ENCODE measurements at regions of chr1 and their contacts with region 1.

Region 1: DNA sequence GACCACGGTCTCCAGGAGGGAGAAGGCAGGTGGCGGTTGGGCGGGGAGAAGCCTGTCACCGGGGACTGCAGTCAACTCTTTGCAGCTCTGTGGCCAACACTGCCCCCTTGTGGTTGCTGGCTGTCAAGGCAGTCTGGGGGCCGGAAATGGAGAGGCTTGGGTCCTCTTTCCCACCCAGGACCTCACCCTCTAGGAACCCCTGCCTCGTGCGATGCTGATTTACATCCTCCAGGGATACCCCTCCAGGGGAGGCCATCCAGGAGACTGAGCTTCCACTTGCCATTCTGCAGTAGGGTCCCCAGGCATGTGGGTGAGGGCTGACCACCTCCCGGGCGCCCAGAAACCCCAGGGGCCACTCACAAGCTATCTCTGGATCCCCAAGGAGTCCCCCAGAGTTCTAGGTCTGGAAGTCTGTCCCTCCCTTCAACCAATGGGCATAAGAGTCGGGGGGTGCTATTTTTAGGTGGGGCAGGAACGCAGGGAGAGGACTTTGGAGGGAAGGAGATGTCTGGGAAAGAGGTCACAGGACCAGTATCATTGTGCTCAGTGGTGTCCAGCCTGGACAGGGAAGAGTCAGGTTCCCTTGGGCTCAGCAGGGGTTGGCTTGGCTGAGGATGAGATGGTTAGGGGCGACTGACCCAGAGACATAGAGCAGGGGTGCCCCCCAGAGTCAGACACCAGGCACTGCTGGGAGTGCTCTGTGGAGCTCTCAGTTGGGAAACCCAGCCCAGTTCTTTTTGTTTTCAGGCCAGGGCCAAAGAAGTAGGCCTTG is 7.1 kb upstream of the GPR61 start:
- DNase-seq: peak; percentile 74
- H3K4me3 ChIP-seq: no peak overlapping the region
- H3K27ac ChIP-seq: no peak overlapping the region
- H3K4me1 ChIP-seq: no peaks in the 10 kb centered on the region
- H3K27me3 ChIP-seq: no peaks in the 10 kb centered on the region
- CTCF ChIP-seq: peak; percentile 96 to 97 (median 96)
- POLR2A ChIP-seq: no peak

Region 2: DNA sequence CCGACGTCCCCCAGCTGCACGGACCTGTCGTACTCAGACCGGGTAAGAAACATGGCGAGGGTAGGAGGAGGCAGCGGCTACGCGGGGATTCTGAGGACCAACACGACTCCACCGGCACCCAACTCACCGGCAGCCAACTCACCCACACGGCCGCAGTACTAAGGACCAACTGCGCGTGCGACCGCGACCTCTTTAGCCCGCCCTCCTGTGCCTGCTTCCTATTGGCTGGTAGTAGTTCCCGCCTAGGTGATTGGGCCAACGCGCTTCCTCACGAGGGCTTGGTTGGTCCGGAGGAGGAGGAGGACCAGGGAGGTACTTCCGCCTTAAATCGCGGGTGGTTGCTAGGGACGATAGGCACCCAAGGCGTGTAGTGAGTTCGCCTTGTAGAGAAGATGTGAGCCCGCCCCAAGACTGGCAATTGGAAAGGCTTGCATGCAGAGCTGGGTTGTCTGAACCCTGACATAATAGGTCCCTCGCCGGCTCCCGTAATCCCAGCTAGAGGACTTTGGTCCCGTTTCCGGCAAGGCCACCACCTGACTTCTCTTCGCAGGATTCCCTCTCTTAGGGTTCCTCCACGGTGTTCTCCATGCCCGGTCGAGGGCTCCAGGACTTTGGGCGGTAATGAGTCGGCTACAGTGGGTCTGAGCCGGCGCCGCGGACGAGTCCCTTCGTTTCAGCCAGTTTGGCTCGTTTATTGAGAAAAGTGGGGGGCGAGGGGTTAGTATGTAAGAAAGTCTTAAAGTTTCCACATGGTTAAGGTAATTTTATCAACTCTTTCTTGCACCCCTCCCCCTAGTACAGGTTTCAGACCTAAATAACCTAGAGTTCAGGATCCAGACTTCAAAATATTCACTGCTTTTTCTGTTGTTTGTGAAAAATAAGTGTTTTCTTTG is 106.0 kb before region 1 on chr1 and contains the start of gene PSMA5:
- intact Hi-C with region 1: loop called (anchors 10 kb)
- DNase-seq: peak; percentile 98
- H3K4me3 ChIP-seq: peak within 1 kb of the TSS; percentile 74 to 84
- H3K27ac ChIP-seq: peak within 1 kb of the TSS; percentile 72 to 73
- H3K4me1 ChIP-seq: peaks cover 8% of the 10 kb centered on the region
- H3K27me3 ChIP-seq: no peaks in the 10 kb centered on the region
- CTCF ChIP-seq: peak in 1 of 4 experiments; percentile 5
- POLR2A ChIP-seq: peak; percentile 68
- total RNA-seq, gene PSMA5: 24.6 to 31.8 TPM

Region 3: GRCh38 chr1:109498161-109498801 is 34.3 kb before region 1 on chr1:
- intact Hi-C with region 1: loop called (anchors 1 kb)
- DNase-seq: no peak
- H3K4me3 ChIP-seq: no peak overlapping the region
- H3K27ac ChIP-seq: no peak overlapping the region
- H3K4me1 ChIP-seq: peaks cover 8% of the 10 kb centered on the region
- H3K27me3 ChIP-seq: no peaks in the 10 kb centered on the region
- CTCF ChIP-seq: peak in 3 of 4 experiments; percentile 26 to 55 (median 53)
- POLR2A ChIP-seq: no peak

Measured in prostate gland (tissue), 2 donors.